ENCODE measurements at regions of chr12 and their contacts with region 1.

Region 1: DNA sequence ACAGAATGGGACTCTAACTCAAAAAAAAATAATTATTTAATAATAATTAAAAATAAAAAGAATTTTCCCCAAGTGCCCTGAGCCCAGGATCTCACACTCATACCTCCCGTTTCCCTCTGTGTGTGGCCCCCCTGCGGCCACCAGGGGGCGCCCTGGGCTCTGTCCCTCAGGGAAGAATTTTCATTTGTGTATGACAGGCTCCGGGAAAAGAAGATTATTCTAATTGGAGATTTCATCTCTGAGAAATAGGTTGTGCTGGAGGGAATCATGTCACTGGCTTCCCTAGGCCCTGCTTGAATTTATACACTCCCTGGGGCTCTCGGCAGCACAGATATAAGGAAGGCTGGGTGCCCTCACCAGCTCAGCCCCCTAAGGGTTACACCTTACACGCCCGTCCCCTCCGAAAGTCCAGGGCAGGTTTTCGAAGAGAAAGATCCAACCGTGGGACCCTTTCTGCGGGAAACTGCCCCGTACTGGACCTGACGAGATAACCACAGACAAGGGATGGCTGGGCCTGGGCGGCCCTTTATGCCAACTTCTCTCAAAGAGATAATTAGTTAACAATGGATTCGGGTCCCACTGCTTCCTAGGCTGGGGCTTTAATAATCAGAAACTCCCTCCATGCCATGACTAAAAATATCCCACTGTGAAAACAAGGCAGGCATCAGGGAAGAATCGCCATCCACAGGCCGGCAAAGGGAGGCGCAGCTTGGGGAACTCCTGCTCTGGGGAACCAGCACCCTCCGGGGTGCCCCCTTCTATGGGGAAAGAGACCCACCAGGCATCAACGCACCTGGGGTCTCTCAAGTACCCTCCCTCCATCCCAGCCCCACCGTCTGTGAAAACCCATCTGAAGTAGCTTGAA is 80.7 kb downstream of the KDM2B start:
- DNase-seq: peak; percentile 69
- ATAC-seq: peak; percentile 82
- H3K4me3 Mint-ChIP-seq: no peak overlapping the region
- H3K27ac Mint-ChIP-seq: no peak overlapping the region
- H3K4me1 Mint-ChIP-seq: peaks cover 17% of the 10 kb centered on the region
- H3K27me3 Mint-ChIP-seq: no peaks in the 10 kb centered on the region
- CTCF ChIP-seq: peak; percentile 82

Region 2: DNA sequence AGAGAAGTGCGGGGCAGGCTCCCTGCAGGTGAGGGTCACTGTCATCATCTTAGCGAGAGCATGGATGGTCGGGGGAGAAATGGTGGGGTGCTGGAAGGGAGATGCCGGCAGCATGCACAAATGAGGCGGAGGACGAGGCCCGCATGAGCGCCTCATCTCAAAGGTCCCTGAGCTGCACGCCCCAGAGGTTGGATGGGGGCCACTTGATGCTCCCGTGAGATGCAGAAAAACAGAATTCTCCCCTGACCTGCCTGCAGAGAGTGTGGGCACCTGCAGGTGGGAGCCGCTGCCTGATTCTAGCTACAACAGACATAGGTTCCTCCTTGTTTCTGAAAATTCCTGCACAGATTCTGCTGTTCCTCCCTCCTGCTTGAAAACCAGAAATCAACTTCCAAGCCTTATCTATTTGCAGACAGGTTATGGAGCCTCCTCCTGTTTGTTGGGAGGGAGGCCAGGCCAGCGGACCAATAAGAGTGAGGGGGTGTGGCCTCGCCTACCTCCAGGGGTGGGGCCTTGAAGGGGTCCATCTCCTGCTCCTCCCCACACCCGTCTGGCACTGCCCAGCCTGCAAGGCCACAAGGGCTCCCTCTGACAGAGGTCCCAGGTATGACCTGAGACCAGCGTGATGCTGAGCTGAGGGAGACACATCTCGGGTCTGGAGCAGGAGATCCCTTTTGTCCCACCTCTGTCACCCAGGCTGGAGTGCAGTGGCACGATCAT is 13.5 kb after region 1 on chr12:
- CTCF ChIA-PET with region 1: interaction called, 13 read pairs
- POLR2A ChIA-PET with region 1: interaction called, 3 read pairs
- intact Hi-C with region 1: loop called (anchors 2 kb)
- DNase-seq: no peak
- ATAC-seq: peak; percentile 57
- H3K4me3 Mint-ChIP-seq: peak overlapping the region; percentile 35
- H3K27ac Mint-ChIP-seq: peak overlapping the region; percentile 86
- H3K4me1 Mint-ChIP-seq: peaks cover 23% of the 10 kb centered on the region
- H3K27me3 Mint-ChIP-seq: no peaks in the 10 kb centered on the region
- CTCF ChIP-seq: no peak

Region 3: GRCh38 chr12:121668750-121669520 is 168.8 kb after region 1 on chr12:
- CTCF ChIA-PET with region 1: interaction called, 24 read pairs
- POLR2A ChIA-PET with region 1: interaction called, 4 read pairs
- intact Hi-C with region 1: no loop called
- DNase-seq: peak; percentile 38
- ATAC-seq: no peak
- H3K4me3 Mint-ChIP-seq: no peak overlapping the region
- H3K27ac Mint-ChIP-seq: peak overlapping the region; percentile 14
- H3K4me1 Mint-ChIP-seq: peaks cover 49% of the 10 kb centered on the region
- H3K27me3 Mint-ChIP-seq: no peaks in the 10 kb centered on the region
- CTCF ChIP-seq: no peak

Region 4: GRCh38 chr12:121678716-121679580 is 178.8 kb after region 1 on chr12:
- CTCF ChIA-PET with region 1: interaction called, 5 read pairs
- POLR2A ChIA-PET with region 1: interaction called, 3 read pairs
- intact Hi-C with region 1: loop called (anchors 1 kb)
- DNase-seq: no peak
- ATAC-seq: no peak
- H3K4me3 Mint-ChIP-seq: no peak overlapping the region
- H3K27ac Mint-ChIP-seq: no peak overlapping the region
- H3K4me1 Mint-ChIP-seq: no peaks in the 10 kb centered on the region
- H3K27me3 Mint-ChIP-seq: no peaks in the 10 kb centered on the region
- CTCF ChIP-seq: no peak

Region 5: GRCh38 chr12:121903202-121903601 is 403.0 kb after region 1 on chr12:
- CTCF ChIA-PET with region 1: no interaction called
- POLR2A ChIA-PET with region 1: no interaction called
- intact Hi-C with region 1: no loop called
- DNase-seq: no peak
- ATAC-seq: no peak
- H3K4me3 Mint-ChIP-seq: no peak overlapping the region
- H3K27ac Mint-ChIP-seq: no peak overlapping the region
- H3K4me1 Mint-ChIP-seq: no peaks in the 10 kb centered on the region
- H3K27me3 Mint-ChIP-seq: no peaks in the 10 kb centered on the region
- CTCF ChIP-seq: no peak

Measured in activated B cell treated with CpG ODN at 0.5 μM for 24 hours (primary cell).